AG04450 (cell line): ENCODE measurements at regions of chr10 and their contacts with region 1.

Region 1: DNA sequence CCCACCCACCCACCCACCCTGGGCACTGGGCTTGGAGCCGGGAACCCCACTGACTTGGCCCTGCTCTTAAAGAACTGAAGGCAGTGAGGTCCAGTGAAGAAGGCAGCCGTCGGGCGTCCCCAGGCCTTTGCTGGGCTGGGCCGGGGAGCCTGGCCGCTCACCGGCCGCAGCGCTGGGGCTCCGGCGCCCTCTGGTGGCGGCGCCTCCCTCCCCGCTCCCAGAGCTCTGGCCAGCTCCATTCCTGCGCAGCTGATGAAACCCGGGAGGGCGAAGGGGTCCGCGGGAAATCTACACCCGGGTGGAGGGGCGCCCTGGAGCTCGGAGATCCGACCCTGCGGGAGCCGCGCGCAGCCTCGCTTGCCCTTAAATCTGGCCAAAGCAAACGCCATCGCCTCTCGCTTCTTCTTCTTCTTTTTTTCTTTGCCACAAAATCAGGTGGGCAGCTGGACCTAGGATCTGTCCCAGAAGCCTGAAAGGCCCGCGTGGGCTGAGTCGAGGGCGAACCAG is 1.7 kb upstream of the CXCL12 start:
- DNase-seq: no peak
- H3K4me3 ChIP-seq: peak overlapping the region; percentile 41
- H3K27ac ChIP-seq: no peak overlapping the region
- H3K27me3 ChIP-seq: peaks cover 4% of the 10 kb centered on the region
- CTCF ChIP-seq: peak; percentile 88

Region 2: DNA sequence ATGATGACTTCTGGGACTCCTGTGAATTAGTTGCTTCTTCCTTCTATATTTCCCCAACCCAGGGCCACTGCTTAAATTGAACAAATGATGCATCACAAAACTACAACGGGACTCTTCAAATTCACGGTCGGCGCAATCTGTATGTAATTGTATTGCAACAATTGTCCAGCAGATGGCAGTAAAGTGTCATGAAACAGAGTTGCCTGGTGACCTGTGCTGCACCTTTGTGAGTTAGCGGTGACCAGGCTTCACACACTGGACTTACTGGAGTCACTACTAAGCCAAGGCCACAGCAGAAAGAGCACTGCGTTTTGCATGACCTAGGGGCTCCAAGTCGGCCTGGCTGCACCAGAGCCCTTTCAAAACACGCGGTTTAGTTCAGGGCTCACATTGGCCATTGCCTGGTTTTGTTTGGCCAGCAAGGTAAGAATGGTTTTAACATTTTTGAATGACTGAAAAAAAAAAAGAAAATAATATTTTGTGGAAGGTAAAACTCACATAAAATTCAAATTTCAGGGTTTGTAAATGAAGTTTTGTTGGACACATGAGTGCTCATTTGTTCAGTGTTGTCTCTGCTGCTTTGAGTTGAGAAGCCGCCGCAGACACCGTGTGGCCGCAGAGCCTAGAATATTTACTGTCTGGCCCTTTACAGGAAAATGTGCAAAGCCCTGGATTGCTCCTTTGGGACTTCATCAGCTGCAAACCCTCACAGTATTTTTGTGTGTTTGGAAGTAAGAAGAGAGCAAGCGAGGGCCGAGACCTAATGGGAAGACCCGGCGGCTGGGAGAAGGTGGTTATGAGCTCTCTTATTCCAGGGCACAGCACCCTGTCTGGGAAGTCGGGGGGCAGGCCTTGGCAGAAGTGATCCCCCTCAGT is 714.7 kb before region 1 on chr10:
- CTCF ChIA-PET with region 1: interaction called, 37 read pairs
- POLR2A ChIA-PET with region 1: no interaction called
- DNase-seq: no peak
- H3K4me3 ChIP-seq: no peak overlapping the region
- H3K27ac ChIP-seq: no peak overlapping the region
- H3K27me3 ChIP-seq: peaks cover 3% of the 10 kb centered on the region
- CTCF ChIP-seq: peak; percentile 76

Region 3: GRCh38 chr10:43689955-43690771 is 696.4 kb before region 1 on chr10:
- CTCF ChIA-PET with region 1: interaction called, 28 read pairs
- POLR2A ChIA-PET with region 1: no interaction called
- DNase-seq: peak; percentile 26
- H3K4me3 ChIP-seq: peak overlapping the region; percentile 73
- H3K27ac ChIP-seq: no peak overlapping the region
- H3K27me3 ChIP-seq: no peaks in the 10 kb centered on the region
- CTCF ChIP-seq: peak; percentile 75

Region 4: DNA sequence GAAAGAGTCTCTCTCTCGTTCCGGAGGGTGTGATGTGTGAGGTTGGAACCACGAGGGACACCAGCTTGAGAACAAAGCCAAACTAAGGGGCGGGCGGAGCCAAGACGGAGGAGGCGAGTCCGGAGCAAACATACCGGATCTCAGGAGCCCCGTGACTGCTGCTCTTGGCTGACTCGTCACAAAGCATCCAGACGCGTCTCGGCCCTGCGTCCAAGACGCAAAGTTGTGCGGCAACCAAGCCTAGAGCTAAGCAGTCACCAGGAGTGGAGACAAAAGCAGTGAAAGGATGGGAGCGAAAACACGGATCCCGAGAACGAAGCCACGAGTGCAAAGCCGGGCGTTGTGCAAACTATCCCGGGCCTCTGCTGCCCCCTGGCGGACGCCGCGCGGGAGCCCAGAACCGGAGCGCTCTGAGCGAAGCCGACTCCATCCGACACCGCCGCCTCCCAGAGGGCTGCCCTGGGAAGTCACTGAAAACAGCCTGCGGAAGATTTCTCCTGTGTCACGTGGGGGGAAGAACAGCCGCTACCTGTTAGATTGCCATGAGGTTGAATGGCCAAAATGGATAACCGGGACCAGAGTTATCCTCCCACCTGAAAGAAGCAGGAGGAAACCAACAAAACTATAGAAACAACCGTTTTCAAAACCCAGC is 478.2 kb after region 1 on chr10:
- CTCF ChIA-PET with region 1: interaction called, 24 read pairs
- POLR2A ChIA-PET with region 1: interaction called, 4 read pairs
- DNase-seq: peak; percentile 58
- H3K4me3 ChIP-seq: peak overlapping the region; percentile 68
- H3K27ac ChIP-seq: peak overlapping the region; percentile 81
- H3K27me3 ChIP-seq: peaks cover 3% of the 10 kb centered on the region
- CTCF ChIP-seq: peak; percentile 94